ENCODE measurements at regions of chr6 and their contacts with region 1.

Region 1: DNA sequence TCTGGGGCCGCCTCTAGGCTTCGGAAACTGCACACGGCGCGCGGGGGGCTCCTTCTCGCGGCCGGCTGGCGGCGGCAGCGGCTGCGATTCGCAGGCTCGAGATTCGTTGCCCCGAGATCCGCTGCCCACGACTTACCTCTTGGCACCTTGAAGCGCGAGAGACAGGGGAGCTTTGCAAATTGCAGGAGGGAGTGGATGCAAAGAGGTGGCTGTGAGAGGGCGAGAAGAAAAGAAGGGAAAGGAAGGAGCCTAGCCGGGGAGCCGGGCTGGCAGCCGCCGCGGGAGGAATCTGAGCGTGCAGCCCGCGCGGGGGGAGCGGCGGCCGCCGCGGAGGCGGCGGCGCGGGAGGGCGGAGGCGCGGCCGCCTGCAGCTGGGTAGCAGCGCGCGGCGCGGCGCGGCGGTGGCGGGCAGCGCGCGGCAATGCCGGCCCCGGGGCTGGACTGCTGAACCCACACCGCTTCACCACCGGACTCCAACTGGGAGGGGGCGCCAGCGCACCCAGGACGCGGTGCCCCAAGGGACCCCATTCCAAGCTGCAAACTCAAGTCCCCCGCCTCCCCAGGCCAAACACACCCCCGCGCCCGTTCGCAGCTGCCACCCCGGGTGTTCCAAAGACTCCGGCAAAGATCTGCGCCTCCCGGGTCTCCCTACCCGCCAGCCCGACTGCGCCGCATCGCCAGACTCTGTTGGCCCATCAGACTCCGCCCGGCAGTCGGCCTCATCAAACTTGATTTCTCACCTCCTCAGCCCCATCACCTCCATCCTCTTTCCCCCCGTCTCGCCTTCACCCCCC is 44.2 kb upstream of the SUPT3H start:
- DNase-seq: peak; percentile 75
- ATAC-seq: peak; percentile 23
- H3K4me3 Mint-ChIP-seq: peak overlapping the region; percentile 90
- H3K27ac Mint-ChIP-seq: peak overlapping the region; percentile 94
- H3K4me1 Mint-ChIP-seq: peaks cover 36% of the 10 kb centered on the region
- H3K27me3 Mint-ChIP-seq: peaks cover 11% of the 10 kb centered on the region

Region 2: GRCh38 chr6:44593539-44593944 is 828.4 kb before region 1 on chr6:
- CTCF ChIA-PET with region 1: no interaction called
- POLR2A ChIA-PET with region 1: no interaction called
- intact Hi-C with region 1: loop called in 1 of 2 experiments (anchors 5 kb)
- DNase-seq: peak; percentile 80
- ATAC-seq: peak; percentile 87
- H3K4me3 Mint-ChIP-seq: no peak overlapping the region
- H3K27ac Mint-ChIP-seq: peak overlapping the region; percentile 9
- H3K4me1 Mint-ChIP-seq: peaks cover 3% of the 10 kb centered on the region
- H3K27me3 Mint-ChIP-seq: peaks cover 11% of the 10 kb centered on the region

Region 3: GRCh38 chr6:44932651-44933091 is 489.2 kb before region 1 on chr6:
- CTCF ChIA-PET with region 1: no interaction called
- POLR2A ChIA-PET with region 1: no interaction called
- intact Hi-C with region 1: loop called in 1 of 2 experiments (anchors 5 kb)
- DNase-seq: peak; percentile 55
- ATAC-seq: peak; percentile 42
- H3K4me3 Mint-ChIP-seq: peak overlapping the region; percentile 67
- H3K27ac Mint-ChIP-seq: peak overlapping the region; percentile 81
- H3K4me1 Mint-ChIP-seq: peaks cover 52% of the 10 kb centered on the region
- H3K27me3 Mint-ChIP-seq: no peaks in the 10 kb centered on the region

Region 4: DNA sequence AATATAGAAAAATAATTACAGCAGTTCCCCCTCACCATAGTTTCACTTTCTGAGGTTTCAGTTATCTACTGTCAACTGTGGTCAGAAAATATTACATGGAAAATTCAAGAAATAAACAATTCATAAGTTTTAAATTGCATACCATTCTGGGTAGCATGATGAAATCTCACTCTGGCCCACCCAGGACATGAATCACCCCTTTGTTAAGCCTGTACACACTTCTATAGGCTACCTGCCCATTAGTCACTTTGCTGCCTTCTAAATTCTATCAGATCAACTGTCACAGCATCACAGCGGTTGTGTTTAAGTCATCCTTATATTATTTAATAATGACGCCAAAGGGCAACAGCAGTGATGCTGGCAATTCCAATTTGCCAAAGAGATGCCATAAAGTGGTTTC is 234.1 kb before region 1 on chr6:
- CTCF ChIA-PET with region 1: no interaction called
- POLR2A ChIA-PET with region 1: no interaction called
- intact Hi-C with region 1: no loop called
- DNase-seq: peak; percentile 36
- ATAC-seq: peak; percentile 90
- H3K4me3 Mint-ChIP-seq: no peak overlapping the region
- H3K27ac Mint-ChIP-seq: peak overlapping the region; percentile 9
- H3K4me1 Mint-ChIP-seq: peaks cover 38% of the 10 kb centered on the region
- H3K27me3 Mint-ChIP-seq: no peaks in the 10 kb centered on the region

Region 5: DNA sequence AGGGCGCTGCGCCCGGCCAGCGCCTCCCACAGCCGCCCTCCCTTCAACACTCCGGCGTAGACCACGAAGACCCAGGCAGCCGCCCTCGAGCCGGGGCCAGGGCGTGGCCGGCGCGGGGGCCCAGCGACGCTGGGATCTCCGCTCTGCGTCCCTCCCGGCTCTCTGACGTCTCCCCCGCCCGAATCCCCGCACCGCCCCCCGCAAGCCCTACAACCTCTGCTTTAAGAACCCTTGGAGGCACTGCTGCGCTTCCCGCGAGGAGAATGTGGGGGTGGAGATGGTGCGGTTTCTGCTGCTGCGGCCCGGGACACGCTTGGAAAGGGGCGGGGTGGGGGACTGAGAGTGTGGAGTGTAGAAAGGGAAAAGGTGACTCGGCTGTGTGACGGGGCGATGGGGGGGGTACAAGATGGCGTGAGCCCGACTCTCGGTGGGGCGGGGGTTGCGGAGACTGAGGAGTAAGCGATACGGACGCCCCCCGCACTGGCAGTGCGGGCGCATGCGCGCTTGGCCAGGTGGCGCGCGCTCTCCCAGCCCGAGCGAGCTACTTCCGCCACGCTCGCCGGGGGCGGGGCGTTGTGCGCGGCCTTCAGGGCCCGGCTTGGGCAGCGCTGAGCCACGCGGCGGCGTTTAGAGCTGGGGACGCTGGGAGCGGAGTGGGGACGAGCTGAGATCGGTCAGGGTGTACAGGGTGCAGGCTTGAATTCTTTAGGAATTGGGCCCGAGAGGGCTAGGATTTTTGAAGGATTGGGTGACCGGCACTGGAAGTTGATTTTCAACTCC is 44.2 kb before region 1 on chr6 and contains the start of gene SUPT3H:
- CTCF ChIA-PET with region 1: interaction called, 11 read pairs
- POLR2A ChIA-PET with region 1: interaction called, 3 read pairs
- intact Hi-C with region 1: loop called (anchors 1 to 2 kb)
- DNase-seq: peak; percentile 97
- ATAC-seq: peak; percentile 89
- H3K4me3 Mint-ChIP-seq: peak within 1 kb of the TSS; percentile 99
- H3K27ac Mint-ChIP-seq: peak within 1 kb of the TSS; percentile 100
- H3K4me1 Mint-ChIP-seq: peaks cover 22% of the 10 kb centered on the region
- H3K27me3 Mint-ChIP-seq: no peaks in the 10 kb centered on the region
- total RNA-seq, gene SUPT3H: 15.5 TPM

Region 6: DNA sequence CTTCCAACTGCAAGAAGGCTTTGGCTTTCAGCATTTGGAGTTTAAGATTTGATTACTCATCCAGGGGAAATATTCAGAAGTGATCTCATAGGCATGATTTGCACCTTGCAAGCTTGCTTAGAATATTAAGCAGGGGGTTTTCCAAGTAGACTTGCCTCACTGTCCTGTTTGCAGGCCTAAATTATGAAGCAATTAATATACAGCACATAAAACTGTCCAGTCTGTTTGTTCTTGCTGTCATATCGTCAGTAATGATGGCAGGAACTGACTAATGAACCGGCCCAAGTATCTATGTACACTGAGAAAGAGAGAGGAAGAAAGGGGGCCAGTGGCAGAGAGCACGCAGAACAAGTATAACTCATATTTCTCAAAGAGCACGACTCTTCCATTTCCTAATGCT is 168.3 kb after region 1 on chr6:
- CTCF ChIA-PET with region 1: no interaction called
- POLR2A ChIA-PET with region 1: no interaction called
- intact Hi-C with region 1: loop called in 1 of 2 experiments (anchors 5 kb)
- DNase-seq: no peak
- ATAC-seq: peak; percentile 40
- H3K4me3 Mint-ChIP-seq: no peak overlapping the region
- H3K27ac Mint-ChIP-seq: peak overlapping the region; percentile 80
- H3K4me1 Mint-ChIP-seq: peaks cover 81% of the 10 kb centered on the region
- H3K27me3 Mint-ChIP-seq: no peaks in the 10 kb centered on the region

Region 7: DNA sequence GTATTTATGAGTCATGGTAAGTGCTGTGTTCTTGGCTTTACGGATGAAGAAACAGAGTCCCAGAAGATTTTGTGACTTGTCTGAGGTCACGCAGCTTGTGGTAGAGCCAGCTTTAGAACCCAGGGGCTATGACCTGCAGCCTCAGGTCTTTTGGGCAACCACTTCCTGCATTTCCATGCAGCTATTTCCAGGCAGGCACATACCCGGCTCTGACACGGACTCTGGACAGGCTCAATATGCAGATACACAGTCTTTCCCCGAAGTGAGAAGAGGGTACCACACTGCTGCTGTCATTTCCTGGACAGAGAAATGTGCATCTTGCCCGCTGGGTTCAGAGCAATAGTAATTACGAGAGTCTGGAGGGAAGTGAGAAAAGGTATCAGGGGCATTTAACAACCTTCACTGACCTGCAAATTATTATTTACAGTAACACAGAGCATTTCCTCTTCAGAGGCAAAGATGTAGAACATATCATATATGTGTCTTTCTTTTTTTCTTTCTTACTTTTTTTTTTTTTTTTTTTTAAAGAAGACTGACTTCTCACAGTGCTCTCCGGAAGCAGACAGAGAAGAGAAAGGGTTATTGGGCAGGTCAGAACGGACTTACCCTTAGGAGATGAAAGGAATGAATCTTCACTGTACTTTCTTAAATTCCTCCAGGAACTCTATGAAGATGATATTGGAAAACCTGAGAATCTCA is 408.7 kb after region 1 on chr6:
- CTCF ChIA-PET with region 1: no interaction called
- POLR2A ChIA-PET with region 1: no interaction called
- intact Hi-C with region 1: loop called in 1 of 2 experiments (anchors 5 kb)
- DNase-seq: peak; percentile 79
- ATAC-seq: peak; percentile 79
- H3K4me3 Mint-ChIP-seq: peak overlapping the region; percentile 63
- H3K27ac Mint-ChIP-seq: peak overlapping the region; percentile 93
- H3K4me1 Mint-ChIP-seq: peaks cover 46% of the 10 kb centered on the region
- H3K27me3 Mint-ChIP-seq: peaks cover 4% of the 10 kb centered on the region